CD4-positive, alpha-beta memory T cell (primary cell): ENCODE measurements at regions of chr10 and their contacts with region 1.

Region 1: GRCh38 chr10:32338262-32338661 is 8.7 kb downstream of the EPC1 start:
- DNase-seq: no peak
- H3K4me3 ChIP-seq: no peak overlapping the region
- H3K4me3 Mint-ChIP-seq: peak overlapping the region in 7 of 8 donors; percentile 41 to 84 (median 65)
- H3K27ac ChIP-seq: no peak overlapping the region
- H3K27ac Mint-ChIP-seq: peak overlapping the region; percentile 8 to 89 (median 58)
- H3K4me1 ChIP-seq: peaks cover 96% of the 10 kb centered on the region
- H3K4me1 Mint-ChIP-seq: peaks cover 77 to 98% (median 89%) of the 10 kb centered on the region in 4 donors
- H3K27me3 ChIP-seq: no peaks in the 10 kb centered on the region
- H3K27me3 Mint-ChIP-seq: no peaks in the 10 kb centered on the region

Region 2: DNA sequence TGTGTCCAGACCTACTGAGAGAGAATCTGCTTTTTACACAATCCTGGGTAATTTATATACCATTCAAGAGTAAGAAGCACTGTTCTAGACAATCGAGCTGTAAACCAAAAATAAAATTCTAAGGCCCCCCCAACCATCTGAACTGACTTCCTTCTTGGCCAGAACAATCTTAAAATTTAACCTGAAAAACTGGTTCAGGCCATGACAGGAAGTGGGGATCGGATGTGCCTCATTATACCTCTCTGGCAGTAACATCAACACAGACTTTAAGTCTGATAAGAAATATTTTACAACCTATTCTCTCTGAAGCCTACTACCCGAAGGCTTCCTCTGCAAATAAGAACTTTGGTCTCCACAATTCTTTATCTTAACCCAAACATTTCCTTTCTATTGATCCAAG is 206.9 kb before region 1 on chr10:
- CTCF ChIA-PET with region 1: no interaction called
- POLR2A ChIA-PET with region 1: no interaction called
- intact Hi-C with region 1: no loop called
- DNase-seq: no peak
- H3K4me3 ChIP-seq: no peak overlapping the region
- H3K4me3 Mint-ChIP-seq: no peak overlapping the region
- H3K27ac ChIP-seq: no peak overlapping the region
- H3K27ac Mint-ChIP-seq: peak overlapping the region in 2 of 7 donors; percentile 42 to 72
- H3K4me1 ChIP-seq: peaks cover 8% of the 10 kb centered on the region
- H3K4me1 Mint-ChIP-seq: peaks cover 5 to 14% (median 7%) of the 10 kb centered on the region in 4 donors
- H3K27me3 ChIP-seq: no peaks in the 10 kb centered on the region
- H3K27me3 Mint-ChIP-seq: peaks cover 0 to 2% of the 10 kb centered on the region in 2 donors

Region 3: GRCh38 chr10:32326119-32326518 is 12.1 kb before region 1 on chr10:
- CTCF ChIA-PET with region 1: interaction called, 4 read pairs
- POLR2A ChIA-PET with region 1: interaction called, 5 read pairs
- intact Hi-C with region 1: loop called (anchors 1 kb)
- DNase-seq: no peak
- H3K4me3 ChIP-seq: no peak overlapping the region
- H3K4me3 Mint-ChIP-seq: peak overlapping the region in 7 of 8 donors; percentile 8 to 71 (median 47)
- H3K27ac ChIP-seq: no peak overlapping the region
- H3K27ac Mint-ChIP-seq: peak overlapping the region in 6 of 7 donors; percentile 2 to 76 (median 8)
- H3K4me1 ChIP-seq: peaks cover 89% of the 10 kb centered on the region
- H3K4me1 Mint-ChIP-seq: peaks cover 67 to 95% (median 83%) of the 10 kb centered on the region in 4 donors
- H3K27me3 ChIP-seq: no peaks in the 10 kb centered on the region
- H3K27me3 Mint-ChIP-seq: no peaks in the 10 kb centered on the region